ENCODE measurements at regions of chr1 and their contacts with region 1.

Region 1: DNA sequence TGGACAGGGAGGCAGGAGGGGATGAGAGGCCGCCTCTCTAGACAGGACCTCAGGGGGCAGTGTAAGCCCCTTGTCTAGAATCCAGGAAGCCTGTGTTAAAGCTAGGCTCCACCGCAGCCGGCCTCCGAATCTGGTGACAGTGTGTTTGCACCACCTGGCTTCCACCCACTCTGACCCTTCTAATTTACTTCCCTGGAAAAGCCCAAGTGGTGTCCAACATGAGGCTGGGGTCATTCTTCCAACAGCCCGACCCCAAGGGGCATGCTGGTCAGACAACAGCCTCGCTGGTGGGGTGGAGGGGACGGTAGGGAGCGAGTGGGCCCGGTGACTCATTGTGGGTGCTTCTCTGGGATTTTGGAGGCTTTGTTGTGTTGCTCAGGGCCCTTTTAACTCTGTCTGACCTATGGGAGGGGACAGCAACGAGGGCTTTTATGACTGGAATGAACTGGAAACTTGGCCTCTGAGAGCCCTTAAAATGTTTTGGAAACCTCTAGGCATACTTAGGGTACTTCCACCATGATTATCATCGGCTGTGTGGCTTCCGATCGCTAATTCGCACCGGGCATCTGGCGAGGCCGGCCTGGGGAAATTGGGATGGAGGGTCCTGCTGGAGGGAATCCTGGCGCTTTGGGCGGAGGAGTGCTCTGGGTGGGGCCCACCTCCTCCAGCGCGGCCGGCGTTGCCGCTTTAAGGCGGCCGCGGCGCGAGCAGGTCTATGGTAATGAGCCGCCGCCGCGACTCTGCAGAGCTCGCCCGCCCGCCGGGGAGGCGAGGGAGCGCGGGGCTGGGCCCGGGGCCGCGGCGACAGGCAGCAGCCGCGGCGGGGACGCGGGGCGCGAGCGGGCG is at the start of gene CELSR2:
- DNase-seq: peak; percentile 67
- H3K4me3 Mint-ChIP-seq: peak within 1 kb of the TSS; percentile 72
- H3K27ac Mint-ChIP-seq: no peak within 1 kb of the TSS
- H3K4me1 Mint-ChIP-seq: peaks cover 6% of the 10 kb centered on the region
- H3K27me3 Mint-ChIP-seq: peaks cover 14% of the 10 kb centered on the region
- total RNA-seq, gene CELSR2: 4.1 and 4.9 TPM in 2 replicates

Region 2: GRCh38 chr1:109201123-109201703 is 47.8 kb before region 1 on chr1:
- intact Hi-C with region 1: loop called (anchors 2 kb)
- DNase-seq: no peak
- H3K4me3 Mint-ChIP-seq: no peak overlapping the region
- H3K27ac Mint-ChIP-seq: peak overlapping the region; percentile 26
- H3K4me1 Mint-ChIP-seq: peaks cover 38% of the 10 kb centered on the region
- H3K27me3 Mint-ChIP-seq: peaks cover 2% of the 10 kb centered on the region

Region 3: DNA sequence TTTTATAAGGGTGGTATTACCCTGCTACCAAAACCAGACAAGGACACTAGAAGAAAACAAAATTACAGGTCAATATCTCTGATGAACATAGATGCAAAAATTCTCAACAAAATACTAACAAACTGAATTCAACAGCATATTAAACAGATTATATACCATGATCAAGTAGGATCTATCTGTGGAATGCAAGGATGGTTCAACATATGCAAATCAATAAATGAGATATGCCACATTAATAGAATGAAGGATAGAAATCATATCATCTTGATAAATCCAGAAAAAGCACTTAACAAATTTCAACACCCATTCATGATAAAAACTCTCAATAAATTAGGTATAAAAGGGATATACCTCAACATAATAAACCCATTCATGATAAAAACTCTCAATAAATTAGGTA is 82.1 kb after region 1 on chr1:
- intact Hi-C with region 1: no loop called
- DNase-seq: no peak
- H3K4me3 Mint-ChIP-seq: no peak overlapping the region
- H3K27ac Mint-ChIP-seq: no peak overlapping the region
- H3K4me1 Mint-ChIP-seq: no peaks in the 10 kb centered on the region
- H3K27me3 Mint-ChIP-seq: peaks cover 5% of the 10 kb centered on the region

Region 4: GRCh38 chr1:109397538-109398342 is 148.7 kb after region 1 on chr1 and contains the start of gene SORT1:
- intact Hi-C with region 1: no loop called
- DNase-seq: peak; percentile 45
- H3K4me3 Mint-ChIP-seq: peak within 1 kb of the TSS; percentile 86
- H3K27ac Mint-ChIP-seq: peak within 1 kb of the TSS; percentile 38
- H3K4me1 Mint-ChIP-seq: peaks cover 25% of the 10 kb centered on the region
- H3K27me3 Mint-ChIP-seq: peaks cover 42% of the 10 kb centered on the region
- total RNA-seq, gene SORT1: 1.4 and 1.5 TPM in 2 replicates

Region 5: DNA sequence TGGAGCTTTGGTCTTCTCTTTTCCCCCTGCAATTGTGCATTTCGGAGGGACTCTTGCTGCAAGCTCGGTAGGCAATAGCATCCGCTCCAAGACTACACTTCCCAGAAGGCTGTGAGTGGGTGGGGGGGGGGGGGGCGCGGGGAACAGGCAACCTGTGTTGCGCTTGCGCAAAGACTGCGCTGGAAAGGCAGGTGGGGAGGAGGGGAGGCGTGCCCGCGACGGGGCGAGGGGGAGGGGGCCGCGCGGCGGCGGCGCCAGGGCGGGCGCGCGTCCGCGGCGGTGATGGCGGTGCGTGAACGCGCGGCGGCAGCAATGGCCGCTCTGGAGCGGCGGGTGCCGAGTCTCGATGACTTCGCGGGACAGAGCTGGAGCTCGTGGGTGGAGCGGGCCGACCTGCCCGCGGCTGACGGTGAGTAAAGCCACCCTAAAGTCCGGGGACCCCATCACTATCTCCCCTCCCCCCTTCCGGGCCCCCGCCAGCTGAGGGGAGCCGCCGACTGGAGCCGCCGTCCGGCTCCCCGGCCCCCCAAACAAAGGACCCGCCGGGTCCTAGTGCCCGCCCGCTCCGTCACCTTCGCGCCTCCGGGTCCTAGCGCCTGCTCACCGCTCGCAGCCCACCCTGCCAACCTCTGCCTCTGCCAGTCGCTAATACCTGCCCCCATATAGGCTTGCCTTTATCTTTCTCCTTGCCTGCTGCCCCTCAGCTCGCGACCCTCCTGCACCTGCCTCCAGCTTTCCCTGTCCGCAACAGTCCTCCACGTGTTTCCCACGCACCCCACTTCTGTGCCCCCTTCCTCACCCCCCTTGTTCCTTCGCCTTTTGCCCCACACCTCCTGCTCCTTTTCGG is 234.9 kb after region 1 on chr1 and contains the start of gene ATXN7L2:
- intact Hi-C with region 1: loop called (anchors 1 kb)
- DNase-seq: peak; percentile 87
- H3K4me3 Mint-ChIP-seq: peak within 1 kb of the TSS; percentile 95
- H3K27ac Mint-ChIP-seq: peak within 1 kb of the TSS; percentile 96
- H3K4me1 Mint-ChIP-seq: peaks cover 35% of the 10 kb centered on the region
- H3K27me3 Mint-ChIP-seq: peaks cover 13% of the 10 kb centered on the region
- total RNA-seq, gene ATXN7L2: 17.4 and 18.0 TPM in 2 replicates